ENCODE measurements at regions of chr15 and their contacts with region 1.

Region 1: DNA sequence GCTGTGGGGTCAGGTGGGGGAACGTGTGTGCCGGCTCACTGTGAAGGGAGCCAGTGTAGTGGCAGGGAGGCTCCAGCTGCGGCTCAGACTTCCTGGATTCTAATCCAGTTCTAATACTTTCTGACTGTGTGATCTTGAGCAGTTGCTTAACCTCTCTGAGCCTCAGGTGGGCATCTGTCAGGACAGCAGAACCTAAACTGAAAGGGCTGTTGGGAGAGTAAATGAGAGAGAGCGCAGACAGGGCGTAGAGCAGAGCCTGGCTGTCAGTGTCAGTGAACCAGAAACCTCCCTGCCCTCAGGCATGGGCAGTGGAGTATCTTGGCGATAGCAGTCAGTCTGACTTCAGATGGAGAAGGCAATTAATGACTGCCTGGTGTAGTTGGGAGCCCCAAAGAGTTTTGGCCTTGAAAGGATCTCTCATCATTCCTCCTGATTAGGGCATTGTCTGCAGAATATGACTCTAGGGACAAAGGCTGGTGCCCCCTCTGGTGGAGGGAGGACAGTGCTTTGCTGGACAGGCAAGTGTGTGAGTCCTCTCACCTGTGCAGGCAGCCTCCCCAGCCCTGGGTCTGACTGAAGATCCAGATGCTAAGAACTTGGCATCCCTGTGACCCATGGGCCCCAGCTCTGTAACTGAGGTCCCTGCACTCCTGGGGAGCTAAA is 9.6 kb downstream of the KBTBD13 start:
- DNase-seq: peak; percentile 77 to 79
- H3K4me3 ChIP-seq: no peak overlapping the region
- H3K4me3 Mint-ChIP-seq: no peak overlapping the region
- H3K27ac Mint-ChIP-seq: peak overlapping the region; percentile 90
- H3K4me1 ChIP-seq: peaks cover 82% of the 10 kb centered on the region
- H3K4me1 Mint-ChIP-seq: peaks cover 75% of the 10 kb centered on the region
- H3K27me3 ChIP-seq: no peaks in the 10 kb centered on the region
- H3K27me3 Mint-ChIP-seq: no peaks in the 10 kb centered on the region
- CTCF ChIP-seq: peak; percentile 39 to 75

Region 2: GRCh38 chr15:65032801-65033537 is 53.2 kb before region 1 on chr15:
- CTCF ChIA-PET with region 1: interaction called, 22 read pairs
- POLR2A ChIA-PET with region 1: no interaction called
- intact Hi-C with region 1: loop called (anchors 1 kb)
- DNase-seq: peak; percentile 88 to 92
- H3K4me3 ChIP-seq: no peak overlapping the region
- H3K4me3 Mint-ChIP-seq: peak overlapping the region; percentile 7
- H3K27ac Mint-ChIP-seq: peak overlapping the region; percentile 22
- H3K4me1 ChIP-seq: peaks cover 30% of the 10 kb centered on the region
- H3K4me1 Mint-ChIP-seq: peaks cover 7% of the 10 kb centered on the region
- H3K27me3 ChIP-seq: no peaks in the 10 kb centered on the region
- H3K27me3 Mint-ChIP-seq: no peaks in the 10 kb centered on the region
- CTCF ChIP-seq: peak; percentile 85 to 91

Region 3: DNA sequence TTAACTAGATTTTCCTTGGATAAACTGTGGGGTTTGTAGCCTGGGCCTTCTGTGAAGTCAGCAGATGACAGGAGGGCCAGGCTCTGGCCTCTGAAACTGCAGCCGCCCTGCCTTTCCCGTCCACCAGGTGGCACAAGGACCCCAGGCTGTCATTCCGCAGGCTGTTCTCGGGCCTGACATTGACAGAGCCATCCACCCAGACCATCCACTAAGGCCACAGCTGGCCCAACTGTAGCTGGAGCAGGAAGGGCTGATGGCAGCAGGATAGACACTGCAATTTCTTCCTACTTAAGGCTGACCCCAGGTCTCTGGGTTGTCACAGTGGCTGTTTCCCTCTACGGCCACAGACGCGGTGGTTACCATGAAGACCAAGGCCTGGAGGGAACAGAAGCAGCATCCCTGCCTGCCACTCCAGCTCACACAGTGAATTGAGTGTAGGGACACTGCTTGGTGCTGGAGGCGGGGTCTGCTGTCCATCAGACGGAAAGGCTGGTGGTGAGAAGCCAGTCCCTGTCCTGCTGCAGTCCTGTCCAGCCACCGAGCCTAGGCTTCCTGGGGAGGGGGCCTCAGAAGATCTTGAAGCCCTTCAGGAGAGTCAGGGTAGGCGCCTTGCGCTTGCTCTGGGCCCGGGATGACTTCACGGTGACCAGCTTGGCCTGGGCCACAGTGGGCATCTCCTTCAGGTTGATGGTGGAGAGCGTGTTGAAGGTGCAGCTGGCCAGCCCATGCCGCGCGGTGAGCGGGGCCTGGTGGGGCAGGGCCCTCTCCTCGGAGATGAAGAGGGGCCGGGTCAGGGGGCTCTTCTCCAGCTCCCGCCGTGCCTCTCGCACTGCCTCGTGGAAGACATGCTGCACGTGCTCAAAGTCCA is 31.6 kb before region 1 on chr15:
- CTCF ChIA-PET with region 1: interaction called, 42 read pairs
- POLR2A ChIA-PET with region 1: no interaction called
- intact Hi-C with region 1: loop called (anchors 1 kb)
- DNase-seq: peak; percentile 82 to 87
- H3K4me3 ChIP-seq: no peak overlapping the region
- H3K4me3 Mint-ChIP-seq: no peak overlapping the region
- H3K27ac Mint-ChIP-seq: peak overlapping the region; percentile 91
- H3K4me1 ChIP-seq: peaks cover 48% of the 10 kb centered on the region
- H3K4me1 Mint-ChIP-seq: peaks cover 31% of the 10 kb centered on the region
- H3K27me3 ChIP-seq: no peaks in the 10 kb centered on the region
- H3K27me3 Mint-ChIP-seq: no peaks in the 10 kb centered on the region
- CTCF ChIP-seq: peak; percentile 84 to 93

Region 4: DNA sequence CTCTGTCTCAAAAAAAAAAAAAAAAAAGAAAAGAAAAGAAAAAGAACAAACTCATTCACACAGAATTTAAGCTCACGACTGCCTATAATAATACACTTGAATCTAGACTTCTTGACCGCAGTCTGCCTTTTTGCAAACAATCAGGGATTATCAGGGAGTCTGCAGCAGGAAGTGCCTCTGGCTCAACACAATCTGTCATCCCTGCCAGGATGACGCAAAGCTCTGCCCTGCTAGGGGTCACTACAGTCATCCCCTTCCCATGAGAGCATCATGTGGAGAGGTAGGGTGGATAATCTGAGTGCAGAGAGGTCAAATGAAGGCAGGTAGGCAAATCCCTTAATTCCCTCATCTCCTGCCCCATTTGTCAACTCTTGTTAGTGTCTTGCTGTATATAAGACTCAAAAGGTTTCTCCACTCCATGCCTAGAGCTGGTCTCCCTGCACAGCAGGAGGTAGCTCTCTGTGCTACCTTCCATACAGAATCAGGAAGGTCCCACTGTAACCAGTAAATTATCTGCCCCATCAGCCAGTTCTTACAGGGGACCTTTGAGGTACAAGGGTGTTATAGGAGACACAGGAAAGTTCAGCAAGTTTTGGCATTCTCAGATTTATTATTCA is 24.6 kb after region 1 on chr15:
- CTCF ChIA-PET with region 1: interaction called, 3 read pairs
- POLR2A ChIA-PET with region 1: interaction called, 12 read pairs
- intact Hi-C with region 1: no loop called
- DNase-seq: no peak
- H3K4me3 ChIP-seq: no peak overlapping the region
- H3K4me3 Mint-ChIP-seq: no peak overlapping the region
- H3K27ac Mint-ChIP-seq: no peak overlapping the region
- H3K4me1 ChIP-seq: no peaks in the 10 kb centered on the region
- H3K4me1 Mint-ChIP-seq: no peaks in the 10 kb centered on the region
- H3K27me3 ChIP-seq: no peaks in the 10 kb centered on the region
- H3K27me3 Mint-ChIP-seq: no peaks in the 10 kb centered on the region
- CTCF ChIP-seq: no peak

Region 5: GRCh38 chr15:65177901-65178300 is 91.8 kb after region 1 on chr15:
- CTCF ChIA-PET with region 1: no interaction called
- POLR2A ChIA-PET with region 1: no interaction called
- intact Hi-C with region 1: no loop called
- DNase-seq: no peak
- H3K4me3 ChIP-seq: no peak overlapping the region
- H3K4me3 Mint-ChIP-seq: no peak overlapping the region
- H3K27ac Mint-ChIP-seq: no peak overlapping the region
- H3K4me1 ChIP-seq: peaks cover 14% of the 10 kb centered on the region
- H3K4me1 Mint-ChIP-seq: no peaks in the 10 kb centered on the region
- H3K27me3 ChIP-seq: no peaks in the 10 kb centered on the region
- H3K27me3 Mint-ChIP-seq: no peaks in the 10 kb centered on the region
- CTCF ChIP-seq: no peak

Region 6: GRCh38 chr15:65516997-65517865 is 431.1 kb after region 1 on chr15 and contains the start of gene DPP8:
- CTCF ChIA-PET with region 1: no interaction called
- POLR2A ChIA-PET with region 1: interaction called, 14 read pairs
- intact Hi-C with region 1: no loop called
- DNase-seq: peak; percentile 93 to 97
- H3K4me3 ChIP-seq: peak within 1 kb of the TSS; percentile 88
- H3K4me3 Mint-ChIP-seq: peak within 1 kb of the TSS; percentile 96
- H3K27ac Mint-ChIP-seq: peak within 1 kb of the TSS; percentile 85
- H3K4me1 ChIP-seq: peaks cover 7% of the 10 kb centered on the region
- H3K4me1 Mint-ChIP-seq: no peaks in the 10 kb centered on the region
- H3K27me3 ChIP-seq: no peaks in the 10 kb centered on the region
- H3K27me3 Mint-ChIP-seq: no peaks in the 10 kb centered on the region
- CTCF ChIP-seq: peak; percentile 43 to 98
- total RNA-seq, gene DPP8: 22.9 and 23.4 TPM in 2 replicates

Measured in Caco-2 (cell line).